ENCODE measurements at regions of chr6 and their contacts with region 1.

Region 1: DNA sequence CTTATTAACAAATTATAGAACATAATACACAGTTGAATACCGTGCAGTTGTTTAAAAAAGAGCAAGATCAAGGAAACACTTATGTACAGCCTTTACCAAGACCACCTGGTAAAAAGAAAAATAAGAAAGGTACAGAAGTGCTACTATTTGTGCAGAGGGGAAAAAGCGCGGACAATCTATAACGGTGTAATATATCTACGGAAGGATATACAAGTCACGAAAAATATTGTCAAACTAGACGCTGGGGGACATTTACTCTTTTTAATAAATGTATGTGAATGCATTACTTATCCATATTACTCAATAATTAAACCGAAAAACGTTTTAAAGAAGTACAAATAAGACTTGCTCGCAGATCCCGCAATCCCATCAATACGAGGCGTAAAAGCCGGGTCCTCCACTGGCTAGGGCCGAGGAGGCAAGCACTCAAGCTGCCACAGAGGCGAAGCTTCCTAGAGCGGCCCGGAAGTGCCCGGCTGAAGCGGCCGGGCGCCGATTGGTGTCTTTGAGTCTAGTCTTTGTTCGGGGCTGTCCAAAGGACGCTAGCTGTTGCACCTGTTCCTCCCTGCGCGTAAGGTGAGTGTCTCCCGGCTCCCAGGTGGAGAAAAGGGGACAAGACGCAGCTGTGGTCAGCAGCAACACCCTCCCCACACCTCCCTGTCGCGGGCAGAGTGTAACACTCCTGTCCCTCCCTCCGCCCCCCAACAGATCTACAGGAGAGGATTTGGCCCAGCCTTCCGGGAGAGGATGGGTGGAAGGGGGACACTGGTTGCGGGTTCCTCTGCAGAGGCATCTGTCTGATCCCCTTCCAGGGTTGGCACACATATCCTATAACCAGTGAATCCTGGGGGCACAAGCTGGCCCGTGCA is at the start of gene ZSCAN16:
- DNase-seq: peak; percentile 83 to 92
- ATAC-seq: peak; percentile 96 to 100 (median 98)
- H3K4me3 ChIP-seq: peak within 1 kb of the TSS; percentile 77
- H3K27ac ChIP-seq: peak within 1 kb of the TSS; percentile 74
- H3K4me1 ChIP-seq: peaks cover 3% of the 10 kb centered on the region
- H3K27me3 ChIP-seq: no peaks in the 10 kb centered on the region
- CTCF ChIP-seq: no peak
- total RNA-seq, gene ZSCAN16: 0.96 to 3.1 (median 1.7) TPM

Region 2: DNA sequence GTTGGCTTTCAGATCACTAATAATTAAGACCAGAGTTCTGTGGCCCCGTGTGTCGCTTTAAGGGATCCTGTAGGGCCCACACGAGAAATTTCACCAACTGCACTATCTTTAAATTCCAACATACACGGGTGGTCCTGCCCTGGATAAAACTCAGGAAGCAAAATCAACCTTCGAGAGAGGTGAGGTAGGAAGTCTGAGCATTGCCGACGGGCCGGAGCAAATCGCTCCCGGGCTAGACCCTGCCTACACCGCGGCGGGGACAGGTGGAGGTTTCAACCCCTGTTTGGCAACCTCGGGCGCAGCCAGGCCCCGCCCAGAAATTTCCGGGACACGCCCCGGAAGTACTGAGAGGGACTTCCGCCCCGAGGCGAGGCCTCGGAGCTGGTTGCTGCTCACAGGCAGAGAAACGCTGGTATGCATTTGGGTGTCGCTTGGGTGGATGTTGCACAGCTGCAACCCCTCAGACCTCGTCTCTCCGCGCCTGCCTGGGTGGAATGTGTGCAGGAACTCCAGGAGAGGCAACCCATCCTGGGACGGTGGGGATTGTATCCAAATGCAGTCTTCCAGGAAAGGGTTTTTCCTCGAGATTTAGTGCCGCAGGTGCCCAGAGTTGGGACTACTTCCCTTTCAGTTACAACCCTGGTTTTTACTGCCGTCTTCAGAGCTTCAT is 37.2 kb after region 1 on chr6:
- intact Hi-C with region 1: no loop called
- DNase-seq: peak; percentile 75 to 85
- ATAC-seq: peak; percentile 79 to 97 (median 95)
- H3K4me3 ChIP-seq: peak overlapping the region; percentile 68
- H3K27ac ChIP-seq: no peak overlapping the region
- H3K4me1 ChIP-seq: no peaks in the 10 kb centered on the region
- H3K27me3 ChIP-seq: no peaks in the 10 kb centered on the region
- CTCF ChIP-seq: no peak

Region 3: GRCh38 chr6:30116724-30117123 is 1992.4 kb after region 1 on chr6:
- intact Hi-C with region 1: loop called in 1 of 2 experiments (anchors 5 kb)
- DNase-seq: no peak
- ATAC-seq: no peak
- H3K4me3 ChIP-seq: no peak overlapping the region
- H3K27ac ChIP-seq: no peak overlapping the region
- H3K4me1 ChIP-seq: no peaks in the 10 kb centered on the region
- H3K27me3 ChIP-seq: peaks cover 0 to 41% (median 4%) of the 10 kb centered on the region in 3 donors
- CTCF ChIP-seq: no peak